Aorta (tissue), 5 donors: ENCODE measurements at regions of chr6 and their contacts with region 1.

Region 1: DNA sequence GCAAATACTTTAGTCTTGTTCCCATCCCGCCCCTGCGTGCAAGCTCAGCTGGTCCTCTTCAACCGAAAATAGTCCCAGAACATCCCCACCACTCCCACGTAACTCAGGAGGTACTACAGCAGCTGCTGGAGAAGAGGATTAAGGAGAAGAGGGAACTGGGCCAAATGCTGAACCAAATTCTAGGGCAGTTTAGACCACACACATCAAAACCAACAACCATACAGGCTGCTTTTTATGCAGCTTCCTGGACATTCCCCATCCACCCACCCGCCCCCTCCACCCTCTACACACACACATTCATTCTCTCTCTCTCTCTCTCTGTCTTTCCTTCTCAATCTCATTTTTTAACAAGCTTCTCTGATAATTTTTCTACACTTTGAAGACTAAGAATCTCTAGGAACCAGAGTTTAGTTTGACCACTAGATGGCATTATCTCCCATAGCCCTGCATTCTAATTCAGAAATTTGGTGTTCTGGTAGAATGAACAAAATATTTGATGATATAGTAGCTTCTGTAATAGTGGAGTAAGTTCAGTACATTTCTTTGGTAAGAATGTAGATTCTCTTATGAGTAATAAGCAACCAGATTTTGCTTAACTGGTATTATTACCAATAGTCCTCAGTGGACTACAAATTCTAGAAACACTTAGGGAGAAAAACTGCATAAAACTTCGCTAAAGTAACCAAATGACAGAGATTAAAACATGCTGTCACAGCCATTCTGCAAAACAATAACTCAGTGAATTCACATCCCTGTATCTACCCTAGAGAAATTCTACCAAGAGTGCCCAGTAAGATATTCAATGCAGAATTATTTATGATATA is 52.1 kb upstream of the BEND6 start:
- DNase-seq: no peak
- ATAC-seq: no peak
- H3K4me3 ChIP-seq: no peak overlapping the region
- H3K27ac ChIP-seq: no peak overlapping the region
- H3K4me1 ChIP-seq: peaks cover 0 to 3% of the 10 kb centered on the region in 2 donors
- H3K27me3 ChIP-seq: no peaks in the 10 kb centered on the region

Region 2: GRCh38 chr6:56955171-56956045 is 52.6 kb after region 1 on chr6:
- intact Hi-C with region 1: loop called in 1 of 2 experiments (anchors 5 kb)
- DNase-seq: peak; percentile 90 to 95
- ATAC-seq: peak; percentile 70
- H3K4me3 ChIP-seq: peak overlapping the region; percentile 85
- H3K27ac ChIP-seq: no peak overlapping the region
- H3K4me1 ChIP-seq: no peaks in the 10 kb centered on the region
- H3K27me3 ChIP-seq: no peaks in the 10 kb centered on the region

Region 3: GRCh38 chr6:57021086-57021720 is 118.3 kb after region 1 on chr6:
- intact Hi-C with region 1: loop called (anchors 2 to 5 kb)
- DNase-seq: no peak
- ATAC-seq: peak; percentile 60
- H3K4me3 ChIP-seq: no peak overlapping the region
- H3K27ac ChIP-seq: no peak overlapping the region
- H3K4me1 ChIP-seq: no peaks in the 10 kb centered on the region
- H3K27me3 ChIP-seq: no peaks in the 10 kb centered on the region

Region 4: DNA sequence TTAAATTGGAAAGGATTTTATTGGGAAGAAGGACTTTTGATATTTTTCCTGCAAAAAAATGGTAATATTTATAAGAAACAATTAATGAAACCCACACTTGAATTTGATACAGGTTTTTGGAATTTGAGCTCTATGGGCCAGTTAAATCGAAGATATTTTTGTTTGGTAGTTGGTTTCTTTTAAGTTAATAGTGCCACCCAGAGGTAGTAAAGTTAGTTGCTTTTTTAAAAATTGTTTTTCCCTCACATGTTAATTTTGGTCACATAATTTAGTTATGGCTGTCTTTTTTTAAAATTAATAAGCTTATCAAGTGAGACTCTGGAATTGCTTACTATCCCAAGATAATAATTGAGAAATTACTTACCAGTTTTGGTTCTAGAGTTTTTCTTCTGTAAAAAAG is 421.7 kb after region 1 on chr6:
- intact Hi-C with region 1: loop called (anchors 2 to 5 kb)
- DNase-seq: no peak
- ATAC-seq: no peak
- H3K4me3 ChIP-seq: no peak overlapping the region
- H3K27ac ChIP-seq: no peak overlapping the region
- H3K4me1 ChIP-seq: no peaks in the 10 kb centered on the region
- H3K27me3 ChIP-seq: no peaks in the 10 kb centered on the region